ENCODE measurements at regions of chr17 and their contacts with region 1.

Region 1: DNA sequence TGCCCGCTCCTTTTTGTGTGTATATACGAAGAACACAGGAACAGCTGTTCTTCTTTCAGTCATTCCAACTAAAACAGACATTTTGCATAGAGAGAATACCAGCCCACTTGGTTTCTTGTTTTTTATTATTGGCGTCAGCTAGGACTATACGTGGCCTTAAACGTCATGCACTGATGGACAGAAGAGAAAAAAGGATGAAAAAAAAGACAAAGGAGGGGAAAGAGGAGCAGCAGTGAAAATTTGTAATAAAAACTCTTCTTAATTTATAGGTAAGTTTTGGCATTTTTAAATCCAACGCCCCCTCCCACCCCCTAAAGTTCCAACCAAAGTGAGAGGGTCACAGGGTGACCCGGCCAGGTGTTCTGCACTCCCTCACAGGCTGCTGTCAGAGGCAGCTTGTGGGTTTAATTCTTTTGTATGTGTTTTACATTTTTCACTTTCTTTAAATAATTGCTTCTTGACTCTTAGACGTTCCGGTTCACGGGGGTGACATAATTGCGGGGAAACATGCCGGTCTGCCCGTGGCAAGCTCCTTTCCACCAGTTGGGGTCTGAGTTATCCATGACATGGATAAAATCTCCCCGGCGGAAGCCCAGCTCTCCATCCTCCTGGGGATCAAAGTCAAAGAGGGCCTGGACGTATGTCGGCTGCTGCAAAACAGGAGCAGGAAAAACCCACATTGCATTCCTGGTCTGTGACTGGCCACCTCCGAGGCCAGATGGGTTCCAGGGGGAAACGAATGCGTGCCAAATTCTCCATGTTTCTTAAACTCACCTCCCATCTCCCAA is 30.9 kb upstream of the SLC25A19 start:
- DNase-seq: no peak
- ATAC-seq: no peak
- H3K4me3 ChIP-seq: no peak overlapping the region
- H3K27ac ChIP-seq: no peak overlapping the region
- H3K4me1 ChIP-seq: peaks cover 15% of the 10 kb centered on the region
- H3K27me3 ChIP-seq: no peaks in the 10 kb centered on the region
- CTCF ChIP-seq: no peak

Region 2: DNA sequence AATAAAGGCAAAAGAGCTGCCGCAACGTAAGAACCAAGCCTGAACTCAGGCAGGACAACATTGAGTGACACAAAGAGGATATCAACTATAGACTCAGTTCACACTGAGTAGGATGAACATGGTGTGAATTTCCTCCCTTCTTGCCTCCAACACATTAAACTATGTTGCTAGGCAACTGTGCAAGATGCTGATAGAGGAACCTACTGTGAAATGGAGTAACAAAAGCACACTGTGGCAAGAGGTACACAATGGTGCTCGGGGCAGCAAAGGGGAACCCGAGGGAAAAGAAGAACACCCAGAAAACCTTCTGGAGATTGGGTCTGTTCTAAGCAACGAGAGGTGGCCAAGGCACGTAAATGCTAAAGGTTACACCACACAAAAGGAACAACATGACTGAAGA is 51.2 kb after region 1 on chr17:
- intact Hi-C with region 1: no loop called
- DNase-seq: no peak
- ATAC-seq: peak; percentile 92
- H3K4me3 ChIP-seq: no peak overlapping the region
- H3K27ac ChIP-seq: no peak overlapping the region
- H3K4me1 ChIP-seq: peaks cover 23% of the 10 kb centered on the region
- H3K27me3 ChIP-seq: no peaks in the 10 kb centered on the region
- CTCF ChIP-seq: no peak

Region 3: DNA sequence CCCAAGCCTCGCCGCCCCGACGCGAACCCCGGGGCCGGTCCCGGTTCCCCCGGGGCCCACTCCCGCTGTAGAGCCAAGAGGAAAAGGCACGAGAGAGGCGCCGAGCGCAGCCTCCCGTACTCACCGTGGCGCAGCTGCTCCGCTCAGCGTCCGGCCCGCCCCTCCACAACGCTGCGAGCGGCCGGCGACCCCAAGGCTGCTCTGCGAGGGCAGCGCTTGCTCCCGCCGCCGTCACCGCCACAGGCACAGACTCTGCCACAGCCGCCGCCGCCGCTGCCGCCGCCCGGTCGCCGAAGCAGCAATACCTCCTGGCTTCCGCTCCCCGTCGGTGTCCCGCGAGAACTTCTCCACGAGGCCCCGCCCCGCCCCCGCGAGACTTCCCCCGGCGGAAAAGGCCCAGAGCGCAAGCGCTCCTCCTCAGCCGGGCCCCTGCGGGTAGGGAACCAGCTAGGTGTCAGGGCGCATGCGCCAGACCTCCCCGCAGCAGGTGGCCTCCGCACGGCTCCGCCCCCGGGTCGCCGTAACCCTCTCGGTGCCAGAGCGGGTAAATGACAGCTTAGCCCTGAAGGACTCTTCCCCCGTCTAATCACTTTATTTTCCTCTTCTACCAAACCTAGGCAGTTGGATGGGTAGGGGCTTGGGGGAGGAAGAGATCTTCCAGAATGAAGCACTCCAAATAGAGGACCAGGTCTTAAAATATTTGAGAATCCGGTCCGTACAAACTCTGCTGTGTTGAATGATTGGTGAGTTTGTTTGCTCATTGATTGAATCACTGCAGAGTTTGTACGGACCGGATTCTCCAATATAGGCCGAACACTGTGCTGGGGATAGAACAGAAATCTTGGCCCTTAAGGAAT is 85.5 kb after region 1 on chr17 and contains the start of gene GRB2:
- intact Hi-C with region 1: loop called (anchors 2 kb)
- DNase-seq: peak; percentile 100
- ATAC-seq: peak; percentile 97
- H3K4me3 ChIP-seq: peak within 1 kb of the TSS; percentile 99
- H3K27ac ChIP-seq: peak within 1 kb of the TSS; percentile 95
- H3K4me1 ChIP-seq: peaks cover 31% of the 10 kb centered on the region
- H3K27me3 ChIP-seq: no peaks in the 10 kb centered on the region
- CTCF ChIP-seq: no peak
- total RNA-seq, gene GRB2: 139 TPM

Measured in upper lobe of right lung (tissue), 1 donor.